SK-N-SH (cell line): ENCODE measurements at regions of chr9 and their contacts with region 1.

Region 1: GRCh38 chr9:84668196-84669012 is 1.1 kb upstream of the NTRK2 start:
- DNase-seq: peak; percentile 92
- H3K4me3 ChIP-seq: peak overlapping the region; percentile 49 to 64
- H3K27ac ChIP-seq: no peak overlapping the region
- H3K4me1 ChIP-seq: peaks cover 0 to 27% of the 10 kb centered on the region in 2 experiments; a peak in 1 of 4 replicates
- H3K27me3 ChIP-seq: peaks cover 19% of the 10 kb centered on the region
- CTCF ChIP-seq: peak; percentile 67
- EP300 ChIP-seq: no peak
- RAD21 ChIP-seq: peak; percentile 81

Region 2: GRCh38 chr9:84652577-84653061 is 15.8 kb before region 1 on chr9:
- CTCF ChIA-PET with region 1: interaction called, 17 read pairs
- POLR2A ChIA-PET with region 1: no interaction called
- DNase-seq: no peak
- H3K4me3 ChIP-seq: no peak overlapping the region
- H3K27ac ChIP-seq: no peak overlapping the region
- H3K4me1 ChIP-seq: no peaks in the 10 kb centered on the region
- H3K27me3 ChIP-seq: no peaks in the 10 kb centered on the region
- CTCF ChIP-seq: no peak
- EP300 ChIP-seq: no peak
- RAD21 ChIP-seq: no peak

Region 3: GRCh38 chr9:84781458-84781857 is 113.1 kb after region 1 on chr9:
- CTCF ChIA-PET with region 1: interaction called, 23 read pairs
- POLR2A ChIA-PET with region 1: no interaction called
- DNase-seq: peak; percentile 15
- H3K4me3 ChIP-seq: no peak overlapping the region; a peak in 1 of 4 replicates
- H3K27ac ChIP-seq: no peak overlapping the region
- H3K4me1 ChIP-seq: no peaks in the 10 kb centered on the region
- H3K27me3 ChIP-seq: no peaks in the 10 kb centered on the region
- CTCF ChIP-seq: peak; percentile 68
- EP300 ChIP-seq: no peak
- RAD21 ChIP-seq: peak; percentile 60

Region 4: DNA sequence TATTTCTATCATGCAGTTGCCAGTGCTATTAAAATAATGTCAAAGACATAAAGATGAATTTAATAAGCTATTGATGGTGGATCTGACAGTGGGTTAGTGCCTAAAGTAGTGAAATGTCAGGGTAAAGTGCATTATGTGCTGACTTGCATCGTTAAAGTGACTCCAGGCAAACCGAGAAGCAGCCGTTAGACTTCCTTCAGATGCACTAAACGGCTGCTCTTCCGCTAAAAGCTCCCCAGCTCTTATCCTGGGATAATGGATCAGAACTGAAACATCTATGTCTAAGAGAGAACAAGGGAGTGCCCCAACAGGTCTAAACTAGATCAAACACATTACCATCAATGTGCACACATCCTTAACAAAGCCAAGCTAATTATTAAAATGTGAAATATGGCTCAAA is 469.3 kb after region 1 on chr9:
- CTCF ChIA-PET with region 1: interaction called, 13 read pairs
- POLR2A ChIA-PET with region 1: no interaction called
- DNase-seq: no peak
- H3K4me3 ChIP-seq: no peak overlapping the region
- H3K27ac ChIP-seq: no peak overlapping the region
- H3K4me1 ChIP-seq: no peaks in the 10 kb centered on the region; a peak in 1 of 4 replicates
- H3K27me3 ChIP-seq: no peaks in the 10 kb centered on the region
- CTCF ChIP-seq: no peak
- EP300 ChIP-seq: no peak
- RAD21 ChIP-seq: no peak

Region 5: DNA sequence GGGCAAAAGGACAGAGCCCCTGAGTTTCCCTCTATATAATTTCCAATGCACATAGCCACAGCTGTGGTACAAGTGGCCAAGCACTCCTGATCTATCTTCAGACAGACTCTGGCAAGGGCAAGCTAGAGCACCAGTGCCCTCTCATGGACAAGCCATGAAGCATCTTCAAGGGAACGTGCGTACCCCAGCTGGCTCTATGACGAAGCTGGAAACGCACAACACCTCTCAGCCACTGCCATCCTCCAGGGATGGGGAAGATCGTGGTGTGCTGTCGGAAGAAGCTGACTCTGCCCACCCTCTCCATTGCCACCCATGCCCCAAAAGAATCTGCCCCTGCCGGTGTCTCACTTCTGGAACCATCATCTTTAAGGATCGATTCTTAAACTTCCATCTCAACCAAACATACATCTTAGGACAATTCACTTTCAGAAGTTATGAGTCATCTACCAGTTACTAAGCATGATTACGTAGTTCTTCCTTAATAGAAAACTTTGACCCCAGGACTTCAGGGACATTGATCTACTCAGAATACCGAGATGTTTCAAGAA is 590.5 kb after region 1 on chr9:
- CTCF ChIA-PET with region 1: interaction called, 33 read pairs
- POLR2A ChIA-PET with region 1: no interaction called
- DNase-seq: peak; percentile 69
- H3K4me3 ChIP-seq: no peak overlapping the region; a peak in 1 of 4 replicates
- H3K27ac ChIP-seq: no peak overlapping the region
- H3K4me1 ChIP-seq: peaks cover 0 to 5% of the 10 kb centered on the region in 2 experiments; a peak in 2 of 4 replicates
- H3K27me3 ChIP-seq: no peaks in the 10 kb centered on the region
- CTCF ChIP-seq: peak; percentile 75
- EP300 ChIP-seq: no peak
- RAD21 ChIP-seq: peak; percentile 97